ENCODE measurements at regions of chr12 and their contacts with region 1.

Region 1: GRCh38 chr12:48165094-48165981 is 8.0 kb upstream of the ASB8 start:
- DNase-seq: peak; percentile 79
- ATAC-seq: peak; percentile 82
- H3K4me3 ChIP-seq: no peak overlapping the region
- H3K4me3 Mint-ChIP-seq: no peak overlapping the region
- H3K27ac ChIP-seq: no peak overlapping the region
- H3K27ac Mint-ChIP-seq: no peak overlapping the region
- H3K4me1 ChIP-seq: no peaks in the 10 kb centered on the region
- H3K4me1 Mint-ChIP-seq: no peaks in the 10 kb centered on the region
- H3K27me3 ChIP-seq: peaks cover 0 to 13% (median 1%) of the 10 kb centered on the region in 4 experiments
- H3K27me3 Mint-ChIP-seq: peaks cover 22% of the 10 kb centered on the region
- CTCF ChIP-seq: peak; percentile 96

Region 2: DNA sequence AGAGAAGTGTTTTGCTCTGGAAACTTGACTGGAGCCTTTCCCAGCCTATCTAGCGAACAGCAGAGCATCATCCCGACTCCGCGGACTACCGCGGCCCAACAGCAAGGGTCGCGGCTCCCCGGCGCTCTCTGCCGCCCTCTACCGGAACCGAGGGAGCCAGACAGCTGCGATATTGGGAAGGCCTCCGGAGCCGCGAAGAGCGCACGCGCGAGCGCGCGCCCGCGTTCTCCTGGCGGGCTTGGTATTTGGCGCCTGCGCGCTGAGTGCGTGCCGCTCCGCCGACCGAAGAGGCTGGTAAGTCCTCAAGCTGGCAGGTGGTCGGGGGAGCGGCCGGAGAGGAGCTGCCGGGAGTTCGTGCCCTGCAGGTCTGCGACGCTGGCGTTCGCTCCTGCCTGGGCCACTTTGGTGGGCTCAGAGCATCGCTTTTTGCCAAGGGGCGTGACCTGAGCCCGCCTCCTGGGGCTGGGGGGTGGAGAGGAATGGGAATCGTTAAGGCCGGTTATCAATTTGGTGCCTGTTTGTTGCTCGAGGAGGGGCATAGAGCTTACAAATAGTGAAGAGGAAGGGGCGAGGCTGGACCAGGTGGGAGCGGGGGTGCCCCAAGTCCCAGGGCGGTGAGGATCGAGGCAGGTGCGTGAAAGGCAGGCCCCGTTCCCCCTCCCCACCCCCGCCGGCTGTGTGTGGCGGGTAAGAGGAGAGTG is 201.8 kb before region 1 on chr12 and contains the start of gene TMEM106C:
- CTCF ChIA-PET with region 1: interaction called, 9 read pairs
- POLR2A ChIA-PET with region 1: no interaction called
- intact Hi-C with region 1: loop called (anchors 1 kb)
- DNase-seq: peak; percentile 97
- ATAC-seq: peak; percentile 99
- H3K4me3 ChIP-seq: peak within 1 kb of the TSS; percentile 68 to 96 (median 75)
- H3K4me3 Mint-ChIP-seq: peak within 1 kb of the TSS; percentile 96
- H3K27ac ChIP-seq: peak within 1 kb of the TSS; percentile 17 to 67
- H3K27ac Mint-ChIP-seq: peak within 1 kb of the TSS; percentile 86
- H3K4me1 ChIP-seq: peaks cover 6 to 14% of the 10 kb centered on the region in 2 donors
- H3K4me1 Mint-ChIP-seq: peaks cover 25% of the 10 kb centered on the region
- H3K27me3 ChIP-seq: no peaks in the 10 kb centered on the region
- H3K27me3 Mint-ChIP-seq: peaks cover 16% of the 10 kb centered on the region
- CTCF ChIP-seq: peak; percentile 94
- total RNA-seq, gene TMEM106C: 32.9 and 37.5 TPM in 2 replicates

Region 3: DNA sequence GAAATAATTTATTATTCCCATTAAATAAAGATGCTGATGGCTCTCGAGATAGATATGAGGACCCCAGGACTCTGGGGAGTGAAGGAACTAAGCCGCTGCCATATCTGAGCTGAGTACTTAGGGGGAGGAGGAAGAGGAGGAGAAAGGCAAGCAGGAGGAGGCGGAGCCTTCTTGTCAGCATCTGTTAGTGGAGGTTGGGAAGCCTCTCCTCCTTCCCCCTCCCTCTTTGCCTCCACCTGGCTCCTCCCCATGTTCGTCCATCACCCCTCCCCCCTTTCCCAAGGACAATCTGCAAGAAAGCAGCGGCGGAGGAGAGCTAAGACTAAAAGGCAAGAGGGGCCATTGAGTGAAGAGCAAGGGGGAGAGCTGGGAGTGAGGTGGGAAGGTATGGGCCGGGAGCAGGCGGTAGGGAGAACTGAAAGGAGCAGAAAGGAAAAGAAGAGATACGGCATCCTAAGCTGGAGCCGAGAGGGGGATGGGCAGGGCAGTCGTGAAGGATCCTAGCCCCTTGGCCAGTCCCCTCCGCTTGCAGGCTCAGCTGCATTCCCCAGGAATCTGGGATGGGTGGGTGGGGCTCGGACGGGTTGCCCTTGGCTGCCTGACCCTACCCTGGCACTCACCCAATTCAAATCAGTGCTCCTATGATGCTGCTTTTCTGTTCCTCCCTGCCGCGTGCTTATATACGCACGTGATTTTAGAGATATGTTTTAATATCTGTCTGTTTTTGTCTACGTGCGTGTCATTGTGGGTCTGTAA is 46.1 kb before region 1 on chr12 and contains the start of gene PFKM:
- CTCF ChIA-PET with region 1: no interaction called
- POLR2A ChIA-PET with region 1: no interaction called
- intact Hi-C with region 1: no loop called
- DNase-seq: peak; percentile 81
- ATAC-seq: peak; percentile 99
- H3K4me3 ChIP-seq: peak within 1 kb of the TSS; percentile 73 to 94 (median 86)
- H3K4me3 Mint-ChIP-seq: peak within 1 kb of the TSS; percentile 96
- H3K27ac ChIP-seq: peak within 1 kb of the TSS; percentile 21 to 62
- H3K27ac Mint-ChIP-seq: peak within 1 kb of the TSS; percentile 85
- H3K4me1 ChIP-seq: peaks cover 7 to 12% of the 10 kb centered on the region in 2 donors
- H3K4me1 Mint-ChIP-seq: peaks cover 19% of the 10 kb centered on the region
- H3K27me3 ChIP-seq: no peaks in the 10 kb centered on the region
- H3K27me3 Mint-ChIP-seq: no peaks in the 10 kb centered on the region
- CTCF ChIP-seq: no peak
- total RNA-seq, gene PFKM: 42.5 and 43.0 TPM in 2 replicates

Region 4: GRCh38 chr12:48175613-48176416 is 10.5 kb after region 1 on chr12:
- CTCF ChIA-PET with region 1: interaction called, 13 read pairs
- POLR2A ChIA-PET with region 1: no interaction called
- intact Hi-C with region 1: no loop called
- DNase-seq: no peak
- ATAC-seq: no peak
- H3K4me3 ChIP-seq: no peak overlapping the region
- H3K4me3 Mint-ChIP-seq: no peak overlapping the region
- H3K27ac ChIP-seq: no peak overlapping the region
- H3K27ac Mint-ChIP-seq: no peak overlapping the region
- H3K4me1 ChIP-seq: no peaks in the 10 kb centered on the region
- H3K4me1 Mint-ChIP-seq: no peaks in the 10 kb centered on the region
- H3K27me3 ChIP-seq: peaks cover 0 to 17% (median 12%) of the 10 kb centered on the region in 4 experiments
- H3K27me3 Mint-ChIP-seq: peaks cover 51% of the 10 kb centered on the region
- CTCF ChIP-seq: no peak

Region 5: DNA sequence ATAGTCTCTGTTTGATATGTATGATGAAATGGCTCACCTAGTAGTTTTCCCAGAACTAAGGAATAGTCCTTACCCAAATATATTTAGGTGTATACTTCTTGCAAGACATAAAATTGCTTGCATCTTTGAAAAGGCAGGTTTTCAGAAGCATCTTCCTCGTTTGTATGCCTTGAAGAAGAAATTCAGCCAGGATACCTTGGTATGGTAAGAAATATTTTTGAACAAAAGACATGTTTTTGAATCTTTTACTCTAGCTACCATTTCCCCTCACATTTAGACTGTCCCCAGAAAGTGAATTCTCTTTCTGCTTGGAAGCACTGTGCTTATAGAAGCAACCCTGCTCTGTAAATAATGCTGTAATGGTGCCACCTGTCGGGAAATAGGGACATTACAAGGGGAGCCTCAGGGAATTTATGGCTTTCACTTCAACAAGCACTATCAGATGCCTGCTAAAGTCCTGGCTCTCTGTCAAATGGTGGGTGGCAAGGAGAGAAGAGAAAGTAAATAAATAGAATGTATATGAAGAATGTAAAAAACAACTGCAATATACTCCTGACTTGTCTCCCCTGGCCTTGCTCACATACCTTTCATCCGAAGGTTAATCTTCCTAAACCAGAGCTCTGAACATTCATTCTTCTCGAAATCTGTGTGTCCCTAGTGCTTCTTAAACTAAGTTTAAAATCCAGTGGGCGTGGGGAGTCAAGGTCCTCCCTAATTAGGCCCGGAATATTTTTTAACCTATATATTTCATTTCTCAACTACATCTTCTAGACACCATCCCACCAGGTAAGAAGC is 24.2 kb after region 1 on chr12:
- CTCF ChIA-PET with region 1: interaction called, 14 read pairs
- POLR2A ChIA-PET with region 1: no interaction called
- intact Hi-C with region 1: no loop called
- DNase-seq: peak; percentile 81
- ATAC-seq: peak; percentile 88
- H3K4me3 ChIP-seq: no peak overlapping the region
- H3K4me3 Mint-ChIP-seq: no peak overlapping the region
- H3K27ac ChIP-seq: no peak overlapping the region
- H3K27ac Mint-ChIP-seq: no peak overlapping the region
- H3K4me1 ChIP-seq: peaks cover 12% of the 10 kb centered on the region in 2 donors
- H3K4me1 Mint-ChIP-seq: peaks cover 11% of the 10 kb centered on the region
- H3K27me3 ChIP-seq: peaks cover 0 to 15% (median 5%) of the 10 kb centered on the region in 4 experiments
- H3K27me3 Mint-ChIP-seq: peaks cover 21% of the 10 kb centered on the region
- CTCF ChIP-seq: peak; percentile 93

Region 6: DNA sequence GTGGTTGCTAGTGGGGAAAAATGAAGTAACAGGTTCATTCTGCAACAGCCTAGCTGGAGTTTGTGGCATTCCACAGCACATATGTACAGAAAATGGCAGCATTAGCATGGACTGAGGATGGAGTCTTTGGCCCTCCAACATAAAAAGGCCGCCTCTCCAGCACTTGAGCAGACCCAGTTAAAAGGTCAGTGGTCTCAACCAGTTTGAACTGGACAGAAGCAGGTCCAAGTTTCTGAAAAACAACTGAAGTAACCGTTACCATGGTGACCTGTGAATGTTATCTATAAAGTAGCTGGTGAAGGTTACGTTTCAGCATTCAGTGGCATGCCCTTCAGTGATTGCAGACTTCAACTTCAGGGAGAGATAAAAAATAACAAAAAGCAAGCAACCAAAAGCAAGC is 71.8 kb after region 1 on chr12:
- CTCF ChIA-PET with region 1: no interaction called
- POLR2A ChIA-PET with region 1: no interaction called
- intact Hi-C with region 1: no loop called
- DNase-seq: no peak
- ATAC-seq: no peak
- H3K4me3 ChIP-seq: no peak overlapping the region
- H3K4me3 Mint-ChIP-seq: no peak overlapping the region
- H3K27ac ChIP-seq: no peak overlapping the region
- H3K27ac Mint-ChIP-seq: no peak overlapping the region
- H3K4me1 ChIP-seq: no peaks in the 10 kb centered on the region
- H3K4me1 Mint-ChIP-seq: no peaks in the 10 kb centered on the region
- H3K27me3 ChIP-seq: peaks cover 0 to 4% (median under 1%) of the 10 kb centered on the region in 4 experiments
- H3K27me3 Mint-ChIP-seq: peaks cover 27% of the 10 kb centered on the region
- CTCF ChIP-seq: no peak

Region 7: GRCh38 chr12:48388430-48388829 is 223.1 kb after region 1 on chr12:
- CTCF ChIA-PET with region 1: no interaction called
- POLR2A ChIA-PET with region 1: no interaction called
- intact Hi-C with region 1: no loop called
- DNase-seq: no peak
- ATAC-seq: no peak
- H3K4me3 ChIP-seq: no peak overlapping the region
- H3K4me3 Mint-ChIP-seq: no peak overlapping the region
- H3K27ac ChIP-seq: no peak overlapping the region
- H3K27ac Mint-ChIP-seq: no peak overlapping the region
- H3K4me1 ChIP-seq: no peaks in the 10 kb centered on the region
- H3K4me1 Mint-ChIP-seq: no peaks in the 10 kb centered on the region
- H3K27me3 ChIP-seq: peaks cover 0 to 14% (median 4%) of the 10 kb centered on the region in 4 experiments
- H3K27me3 Mint-ChIP-seq: peaks cover 55% of the 10 kb centered on the region
- CTCF ChIP-seq: no peak

Region 8: DNA sequence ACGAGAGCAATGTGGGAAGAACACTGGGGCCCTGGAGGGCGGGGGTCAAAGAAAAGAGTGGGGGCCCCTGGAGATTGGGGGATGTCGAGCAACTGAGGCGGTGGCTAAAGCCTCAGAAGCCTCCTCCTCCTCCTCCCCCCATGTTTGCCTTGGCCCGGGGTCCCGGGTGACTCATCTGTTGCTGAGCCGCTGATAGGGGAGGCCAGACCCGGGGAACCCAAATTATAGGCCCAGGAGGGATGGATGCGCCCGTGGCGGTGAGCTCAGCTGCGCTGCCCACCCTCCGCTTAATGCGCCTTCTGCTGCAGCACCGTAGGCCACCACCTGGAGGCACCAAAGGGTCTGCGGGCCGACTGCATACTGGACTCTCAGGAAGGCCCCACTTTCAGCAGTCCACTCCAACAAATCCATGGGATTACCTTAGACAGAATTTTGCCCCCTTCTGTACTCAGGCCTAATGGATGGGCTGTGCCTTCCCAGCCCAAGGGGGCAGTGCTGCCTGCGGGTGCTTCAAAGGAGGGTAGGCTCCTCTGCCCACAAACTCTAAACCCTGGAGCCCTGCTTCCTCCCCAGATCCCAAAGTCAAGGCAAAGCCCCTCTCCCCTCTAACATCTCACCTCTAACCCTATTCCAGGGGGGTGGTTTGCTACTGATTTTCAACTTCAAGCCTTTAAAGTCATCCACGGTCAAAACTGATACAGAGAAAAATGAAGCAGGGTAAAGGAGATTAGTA is 808.8 kb after region 1 on chr12:
- CTCF ChIA-PET with region 1: no interaction called
- POLR2A ChIA-PET with region 1: no interaction called
- intact Hi-C with region 1: no loop called
- DNase-seq: peak; percentile 56
- ATAC-seq: no peak
- H3K4me3 ChIP-seq: no peak overlapping the region
- H3K4me3 Mint-ChIP-seq: no peak overlapping the region
- H3K27ac ChIP-seq: no peak overlapping the region
- H3K27ac Mint-ChIP-seq: no peak overlapping the region
- H3K4me1 ChIP-seq: peaks cover 62 to 67% of the 10 kb centered on the region in 2 donors
- H3K4me1 Mint-ChIP-seq: peaks cover 54% of the 10 kb centered on the region
- H3K27me3 ChIP-seq: peaks cover 2 to 86% (median 64%) of the 10 kb centered on the region in 4 experiments
- H3K27me3 Mint-ChIP-seq: peaks cover 73% of the 10 kb centered on the region
- CTCF ChIP-seq: peak; percentile 77

Measured in B cell (primary cell).